WTC11 (cell line): ENCODE measurements at regions of chr17 and their contacts with region 1.

Region 1: GRCh38 chr17:81291662-81292061 is 3.4 kb downstream of the SLC38A10 start:
- DNase-seq: peak; percentile 76
- ATAC-seq: peak; percentile 41
- H3K4me3 Mint-ChIP-seq: no peak overlapping the region
- H3K27ac Mint-ChIP-seq: no peak overlapping the region
- H3K4me1 Mint-ChIP-seq: peaks cover 14% of the 10 kb centered on the region
- H3K27me3 Mint-ChIP-seq: no peaks in the 10 kb centered on the region
- CTCF ChIP-seq: peak; percentile 55

Region 2: GRCh38 chr17:81189670-81190530 is 101.8 kb before region 1 on chr17:
- CTCF ChIA-PET with region 1: no interaction called
- POLR2A ChIA-PET with region 1: no interaction called
- DNase-seq: peak; percentile 49
- ATAC-seq: peak; percentile 41; the same call in 1 of the 2 replicates
- H3K4me3 Mint-ChIP-seq: no peak overlapping the region
- H3K27ac Mint-ChIP-seq: no peak overlapping the region
- H3K4me1 Mint-ChIP-seq: no peaks in the 10 kb centered on the region
- H3K27me3 Mint-ChIP-seq: no peaks in the 10 kb centered on the region
- CTCF ChIP-seq: no peak

Region 3: GRCh38 chr17:81253358-81254131 is 38.1 kb before region 1 on chr17:
- CTCF ChIA-PET with region 1: interaction called, 17 read pairs
- POLR2A ChIA-PET with region 1: no interaction called
- DNase-seq: peak; percentile 57
- ATAC-seq: peak; percentile 29; the same call in 1 of the 2 replicates
- H3K4me3 Mint-ChIP-seq: no peak overlapping the region
- H3K27ac Mint-ChIP-seq: peak overlapping the region; percentile 77; the same call in 1 of the 2 replicates
- H3K4me1 Mint-ChIP-seq: peaks cover 24% of the 10 kb centered on the region
- H3K27me3 Mint-ChIP-seq: no peaks in the 10 kb centered on the region
- CTCF ChIP-seq: peak; percentile 84

Region 4: GRCh38 chr17:81272616-81273015 is 19.0 kb before region 1 on chr17:
- CTCF ChIA-PET with region 1: no interaction called
- POLR2A ChIA-PET with region 1: no interaction called
- DNase-seq: no peak
- ATAC-seq: no peak
- H3K4me3 Mint-ChIP-seq: no peak overlapping the region
- H3K27ac Mint-ChIP-seq: 0 out of 2 replicates have a peak overlapping the region, but pooled peaks have one; percentile 42
- H3K4me1 Mint-ChIP-seq: no peaks in the 10 kb centered on the region
- H3K27me3 Mint-ChIP-seq: no peaks in the 10 kb centered on the region
- CTCF ChIP-seq: no peak

Region 5: DNA sequence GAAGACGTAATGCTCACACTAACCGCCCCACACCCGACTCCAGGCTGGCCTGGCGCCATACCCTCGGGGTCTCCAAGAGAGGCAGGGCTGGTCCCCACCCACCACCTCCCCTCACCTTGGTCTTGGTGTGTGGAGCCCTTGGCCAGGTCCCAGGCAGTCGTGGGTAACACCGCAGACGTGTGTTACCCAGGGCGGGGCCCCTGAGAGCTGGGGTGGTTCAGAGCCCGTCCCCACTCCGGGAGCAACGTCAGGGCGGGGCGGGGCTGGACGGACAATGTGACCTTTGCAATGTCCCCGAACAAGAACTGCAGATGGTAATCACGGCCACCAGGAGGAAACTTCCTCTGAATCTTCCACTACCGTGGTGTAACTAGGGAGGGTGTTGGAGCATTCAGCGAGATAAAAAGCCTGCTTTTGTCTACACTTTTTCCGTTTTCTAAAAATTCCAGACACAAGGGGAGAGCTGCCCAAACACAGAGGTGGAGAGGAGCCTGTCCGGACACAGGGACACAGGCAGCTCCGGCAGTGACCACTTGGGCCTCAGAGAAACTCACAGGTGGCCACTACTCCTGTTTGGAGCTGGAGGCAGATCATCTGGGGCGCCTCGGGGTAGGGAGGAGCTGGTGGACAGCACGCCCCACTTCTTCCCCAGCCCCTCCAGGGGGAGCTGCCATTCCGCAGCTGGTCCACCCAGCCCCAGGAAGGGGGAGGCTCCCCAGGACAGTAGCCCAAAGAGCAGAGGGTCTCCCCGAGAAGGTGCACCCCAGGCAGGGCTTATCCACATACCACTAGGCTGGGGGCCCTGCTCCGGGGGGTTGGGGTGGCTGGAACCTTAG is 17.6 kb after region 1 on chr17:
- CTCF ChIA-PET with region 1: interaction called, 14 read pairs
- POLR2A ChIA-PET with region 1: no interaction called
- DNase-seq: peak; percentile 64
- ATAC-seq: peak; percentile 79
- H3K4me3 Mint-ChIP-seq: peak overlapping the region; percentile 27
- H3K27ac Mint-ChIP-seq: peak overlapping the region; percentile 92
- H3K4me1 Mint-ChIP-seq: peaks cover 9% of the 10 kb centered on the region
- H3K27me3 Mint-ChIP-seq: no peaks in the 10 kb centered on the region; the same call in 1 of the 2 replicates
- CTCF ChIP-seq: peak; percentile 29; the same call in 1 of the 2 replicates

Region 6: GRCh38 chr17:81328978-81329919 is 37.6 kb after region 1 on chr17:
- CTCF ChIA-PET with region 1: interaction called, 10 read pairs
- POLR2A ChIA-PET with region 1: no interaction called
- DNase-seq: peak; percentile 69
- ATAC-seq: peak; percentile 72
- H3K4me3 Mint-ChIP-seq: no peak overlapping the region
- H3K27ac Mint-ChIP-seq: peak overlapping the region; percentile 79; the same call in 1 of the 2 replicates
- H3K4me1 Mint-ChIP-seq: peaks cover 19% of the 10 kb centered on the region
- H3K27me3 Mint-ChIP-seq: no peaks in the 10 kb centered on the region; the same call in 1 of the 2 replicates
- CTCF ChIP-seq: no peak

Region 7: DNA sequence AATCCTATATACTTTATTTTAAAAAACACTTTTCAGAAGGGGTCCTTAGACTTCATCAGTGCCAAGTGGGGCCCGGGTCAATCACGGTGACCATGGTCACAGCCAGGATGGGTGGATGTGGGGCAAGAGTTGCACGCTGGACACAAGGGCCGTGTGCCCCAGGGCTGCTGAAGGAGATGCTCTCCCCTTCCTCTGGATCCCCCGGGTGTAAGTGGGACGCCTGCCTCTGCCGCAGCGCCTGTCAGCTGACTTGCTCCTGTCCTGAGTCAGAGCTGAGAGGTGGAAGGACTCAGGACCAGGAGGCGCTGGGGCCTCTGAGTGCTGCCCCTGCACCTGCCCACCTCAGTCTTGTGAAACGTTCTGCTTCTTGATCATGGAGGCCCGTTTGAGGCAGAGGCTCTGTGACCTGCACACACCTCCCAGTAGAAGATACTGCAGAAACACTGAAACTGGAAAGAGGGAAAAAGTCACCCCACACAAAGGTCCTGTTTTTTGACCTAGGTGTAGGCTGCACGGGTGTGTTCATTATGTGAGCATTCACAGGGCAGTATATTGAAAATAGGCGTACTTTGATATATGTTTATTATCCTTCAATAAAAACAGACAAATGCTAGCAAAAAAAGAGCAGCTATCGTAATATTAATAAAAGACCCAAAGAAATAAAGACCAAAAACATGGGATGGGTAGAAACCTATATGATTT is 62.7 kb after region 1 on chr17:
- CTCF ChIA-PET with region 1: no interaction called
- POLR2A ChIA-PET with region 1: no interaction called
- DNase-seq: no peak
- ATAC-seq: no peak
- H3K4me3 Mint-ChIP-seq: no peak overlapping the region
- H3K27ac Mint-ChIP-seq: no peak overlapping the region
- H3K4me1 Mint-ChIP-seq: peaks cover 9% of the 10 kb centered on the region
- H3K27me3 Mint-ChIP-seq: peaks cover 31% of the 10 kb centered on the region
- CTCF ChIP-seq: no peak

Region 8: DNA sequence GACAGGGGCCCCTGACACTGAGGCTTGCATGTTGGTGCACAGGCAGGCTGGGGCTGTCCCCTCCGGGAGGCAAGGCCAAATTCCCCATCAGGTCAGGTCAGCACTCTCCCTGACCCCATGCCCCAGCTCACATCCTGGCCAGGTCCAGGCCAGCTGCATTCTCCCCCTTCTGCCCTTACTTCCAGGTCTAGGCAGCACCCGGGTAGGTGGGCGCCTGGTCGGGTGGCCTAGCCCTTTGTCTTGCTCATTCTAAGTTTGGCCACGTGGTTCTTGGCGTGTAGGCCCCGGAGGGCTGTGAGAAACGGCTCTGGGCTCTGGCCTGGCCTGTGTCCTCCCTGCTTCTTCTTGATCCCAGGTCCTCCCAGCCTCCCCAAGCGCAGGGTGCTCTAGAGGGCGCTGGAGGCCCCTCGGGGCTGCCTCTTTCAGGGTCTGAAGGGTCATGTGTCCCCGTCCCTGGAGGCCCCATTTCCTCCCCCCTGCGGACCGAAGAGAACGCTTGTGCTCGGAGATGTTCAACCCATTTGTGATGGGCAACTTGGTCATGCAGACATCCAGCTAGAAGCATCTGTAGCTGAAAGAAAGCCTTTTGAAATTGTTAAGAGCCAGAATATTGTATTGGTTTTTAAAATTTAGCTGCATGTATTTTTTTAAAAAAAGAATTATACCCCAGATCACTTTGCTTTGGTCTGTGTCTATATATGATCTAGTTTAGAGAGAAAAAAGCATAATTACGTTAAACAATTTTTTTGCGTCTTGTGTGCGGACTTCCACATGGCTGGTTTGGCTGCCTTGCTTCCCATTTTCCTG is 110.3 kb after region 1 on chr17:
- CTCF ChIA-PET with region 1: interaction called, 10 read pairs
- POLR2A ChIA-PET with region 1: no interaction called
- DNase-seq: peak; percentile 71
- ATAC-seq: peak; percentile 16
- H3K4me3 Mint-ChIP-seq: peak overlapping the region; percentile 74
- H3K27ac Mint-ChIP-seq: peak overlapping the region; percentile 77
- H3K4me1 Mint-ChIP-seq: peaks cover 70% of the 10 kb centered on the region
- H3K27me3 Mint-ChIP-seq: peaks cover 88% of the 10 kb centered on the region
- CTCF ChIP-seq: no peak